Activated B cell treated with CpG ODN at 0.5 μM for 24 hours (primary cell): ENCODE measurements at regions of chr19 and their contacts with region 1.

Region 1: DNA sequence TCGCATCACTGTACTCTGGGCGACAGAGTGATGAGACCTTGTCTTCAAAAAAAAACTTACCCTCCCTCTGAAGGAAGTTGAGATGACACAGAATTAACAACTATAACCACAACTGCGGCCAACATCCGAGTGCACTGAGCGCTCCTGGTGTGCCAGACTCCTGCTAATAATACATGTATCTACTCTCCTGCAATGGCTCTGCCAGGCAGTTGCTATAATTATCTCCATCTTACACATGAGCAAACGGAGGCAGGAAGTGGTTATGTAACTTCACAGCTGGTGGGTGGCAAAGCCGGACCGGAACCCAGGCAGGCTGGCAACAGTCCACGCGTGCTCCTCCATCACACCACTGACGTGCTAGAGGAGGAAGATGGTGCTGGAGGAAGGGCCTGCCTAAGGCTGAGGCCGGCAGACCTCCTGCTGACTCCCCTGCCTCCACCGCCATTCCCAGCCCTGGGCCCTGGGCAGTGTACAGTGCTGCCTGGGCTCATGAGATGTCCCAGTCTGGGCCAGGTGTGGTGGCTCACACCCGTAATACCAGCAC is 12.6 kb downstream of the XRCC1 start:
- DNase-seq: peak; percentile 56
- ATAC-seq: peak; percentile 84
- H3K4me3 Mint-ChIP-seq: peak overlapping the region; percentile 56
- H3K27ac Mint-ChIP-seq: peak overlapping the region; percentile 93
- H3K4me1 Mint-ChIP-seq: peaks cover 58% of the 10 kb centered on the region
- H3K27me3 Mint-ChIP-seq: no peaks in the 10 kb centered on the region
- CTCF ChIP-seq: no peak

Region 2: DNA sequence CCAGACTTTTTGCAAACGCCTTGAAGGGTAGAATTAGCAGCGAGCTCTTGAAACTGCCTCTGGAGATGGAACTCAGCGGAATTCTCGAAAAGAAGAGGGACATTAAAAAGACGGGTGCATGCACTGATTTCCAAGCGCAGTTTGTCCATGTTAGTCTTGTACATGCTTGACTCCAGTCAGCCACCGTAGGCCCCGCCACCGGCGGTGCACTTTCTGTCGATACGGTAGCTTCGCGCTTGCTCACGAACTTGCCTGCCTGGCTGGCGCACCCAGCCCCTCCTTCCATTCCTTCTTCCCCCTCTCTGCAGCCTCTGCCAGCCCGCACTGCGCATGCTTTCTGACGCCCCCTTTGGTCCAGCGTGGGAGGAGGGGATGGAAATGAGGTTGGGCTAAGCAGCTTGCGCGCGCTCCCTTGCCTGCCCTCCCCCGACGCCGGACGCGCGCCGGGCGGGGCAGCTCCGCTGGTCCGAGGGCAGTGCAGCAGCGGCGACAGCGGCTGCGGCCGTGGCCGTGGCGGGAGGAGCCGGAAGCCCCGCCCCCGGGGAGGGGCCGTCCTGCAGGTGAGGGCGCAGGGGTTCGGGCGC is 29.7 kb before region 1 on chr19 and contains the start of gene ZNF575:
- CTCF ChIA-PET with region 1: interaction called, 3 read pairs
- POLR2A ChIA-PET with region 1: interaction called, 7 read pairs
- intact Hi-C with region 1: loop called (anchors 2 kb)
- DNase-seq: peak; percentile 77
- ATAC-seq: peak; percentile 45
- H3K4me3 Mint-ChIP-seq: peak within 1 kb of the TSS; percentile 97
- H3K27ac Mint-ChIP-seq: peak within 1 kb of the TSS; percentile 98
- H3K4me1 Mint-ChIP-seq: peaks cover 19% of the 10 kb centered on the region
- H3K27me3 Mint-ChIP-seq: no peaks in the 10 kb centered on the region
- CTCF ChIP-seq: no peak
- total RNA-seq, gene ZNF575: 1.9 and 3.4 TPM in 2 replicates

Region 3: GRCh38 chr19:43575156-43575950 is 12.6 kb after region 1 on chr19 and contains the starts of genes PINLYP and XRCC1:
- CTCF ChIA-PET with region 1: no interaction called
- POLR2A ChIA-PET with region 1: interaction called, 7 read pairs
- intact Hi-C with region 1: loop called (anchors 1 kb)
- DNase-seq: peak; percentile 87
- ATAC-seq: peak; percentile 97
- H3K4me3 Mint-ChIP-seq: peak within 1 kb of the TSS; percentile 96
- H3K27ac Mint-ChIP-seq: peak within 1 kb of the TSS; percentile 92
- H3K4me1 Mint-ChIP-seq: peaks cover 44% of the 10 kb centered on the region
- H3K27me3 Mint-ChIP-seq: no peaks in the 10 kb centered on the region
- CTCF ChIP-seq: no peak
- total RNA-seq, gene PINLYP: 1.9 and 2.1 TPM in 2 replicates
- total RNA-seq, gene XRCC1: 31.9 and 34.5 TPM in 2 replicates

Region 4: GRCh38 chr19:43619262-43620060 is 56.7 kb after region 1 on chr19 and contains the start of gene ZNF428:
- CTCF ChIA-PET with region 1: no interaction called
- POLR2A ChIA-PET with region 1: no interaction called
- intact Hi-C with region 1: loop called (anchors 2 kb)
- DNase-seq: peak; percentile 83
- ATAC-seq: peak; percentile 87
- H3K4me3 Mint-ChIP-seq: peak within 1 kb of the TSS; percentile 94
- H3K27ac Mint-ChIP-seq: peak within 1 kb of the TSS; percentile 96
- H3K4me1 Mint-ChIP-seq: peaks cover 21% of the 10 kb centered on the region
- H3K27me3 Mint-ChIP-seq: no peaks in the 10 kb centered on the region
- CTCF ChIP-seq: no peak
- total RNA-seq, gene ZNF428: 26.2 and 29.1 TPM in 2 replicates